Dendritic cell treated with granulocyte-macrophage colony-stimulating factor and Interleukin-4, amounts not matched to agents 40 ng/mL and 50 ng/mL, for 4 days (primary cell): ENCODE measurements at regions of chr7 and their contacts with region 1.

Region 1: DNA sequence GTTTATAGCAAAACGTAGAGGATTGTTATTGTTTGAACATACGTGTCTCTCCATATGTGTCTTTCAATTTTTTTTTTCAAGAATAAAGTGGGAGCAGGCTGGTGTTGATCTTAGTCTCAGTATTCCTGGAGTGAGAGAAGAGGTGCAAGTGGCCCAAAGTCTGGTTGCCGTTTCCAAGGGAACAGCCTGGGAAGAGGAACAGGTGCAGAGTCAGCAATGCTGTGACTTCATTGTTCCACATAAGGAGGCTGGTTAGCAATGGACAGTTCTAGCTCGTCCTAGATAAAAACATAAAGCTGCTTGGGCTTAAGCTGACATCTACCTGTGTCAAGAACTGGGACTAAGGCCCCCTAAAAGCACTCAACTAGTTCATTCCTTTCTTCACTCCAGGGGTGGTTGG is 626.6 kb upstream of the TPK1 start:
- H3K4me3 Mint-ChIP-seq: no peak overlapping the region
- H3K27ac Mint-ChIP-seq: no peak overlapping the region
- H3K4me1 Mint-ChIP-seq: no peaks in the 10 kb centered on the region
- H3K27me3 Mint-ChIP-seq: no peaks in the 10 kb centered on the region

Region 2: DNA sequence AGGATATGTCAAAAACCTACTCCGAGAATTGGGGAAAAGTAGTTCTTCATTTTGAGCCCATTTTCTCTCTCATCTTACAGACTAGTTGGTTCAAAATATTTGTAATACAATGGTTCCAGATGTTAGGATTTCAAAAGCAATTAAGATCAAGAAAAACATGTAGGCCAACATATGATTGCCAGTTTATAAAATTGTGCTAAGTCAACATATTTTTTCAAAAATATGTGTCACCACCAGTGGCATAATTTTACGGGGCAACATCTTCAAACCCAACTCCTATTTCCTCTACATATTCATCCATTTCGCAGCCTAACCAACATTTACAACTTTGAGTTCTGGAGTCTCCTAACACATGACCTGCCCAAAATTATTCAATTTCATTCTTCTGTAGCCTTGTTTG is 112.1 kb before region 1 on chr7:
- intact Hi-C with region 1: no loop called
- H3K4me3 Mint-ChIP-seq: no peak overlapping the region
- H3K27ac Mint-ChIP-seq: no peak overlapping the region
- H3K4me1 Mint-ChIP-seq: no peaks in the 10 kb centered on the region
- H3K27me3 Mint-ChIP-seq: no peaks in the 10 kb centered on the region

Region 3: GRCh38 chr7:145398758-145399157 is 63.7 kb before region 1 on chr7:
- intact Hi-C with region 1: loop called (anchors 10 kb)
- H3K4me3 Mint-ChIP-seq: no peak overlapping the region
- H3K27ac Mint-ChIP-seq: no peak overlapping the region
- H3K4me1 Mint-ChIP-seq: no peaks in the 10 kb centered on the region
- H3K27me3 Mint-ChIP-seq: no peaks in the 10 kb centered on the region